Vagina (tissue), 2 donors: ENCODE measurements at regions of chr1 and their contacts with region 1.

Region 1: DNA sequence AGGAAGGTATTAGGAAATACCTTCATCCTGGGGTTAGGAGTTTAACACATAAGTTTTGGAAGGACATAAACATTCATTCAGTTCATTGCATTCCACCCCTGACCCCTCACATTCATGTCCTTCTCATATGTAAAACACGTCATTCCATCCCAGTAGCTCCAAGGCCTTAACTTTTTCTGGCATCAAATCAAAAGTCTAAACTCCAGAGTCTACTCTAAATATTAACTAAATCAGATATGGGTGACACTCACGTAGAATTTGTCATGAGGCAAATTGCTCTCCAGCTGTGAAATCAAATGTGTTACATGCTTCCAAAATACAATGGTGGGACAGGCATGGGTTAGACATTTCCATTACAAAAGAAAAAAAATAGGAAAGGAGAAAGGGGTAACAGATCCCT is 298.2 kb upstream of the LRRC7 start:
- DNase-seq: no peak
- H3K4me3 ChIP-seq: no peak overlapping the region
- H3K27ac ChIP-seq: no peak overlapping the region
- H3K4me1 ChIP-seq: peaks cover 3% of the 10 kb centered on the region
- H3K27me3 ChIP-seq: no peaks in the 10 kb centered on the region
- CTCF ChIP-seq: no peak
- POLR2A ChIP-seq: no peak

Region 2: GRCh38 chr1:68276431-68276830 is 993.1 kb before region 1 on chr1:
- intact Hi-C with region 1: loop called (anchors 5 kb)
- DNase-seq: no peak
- H3K4me3 ChIP-seq: no peak overlapping the region
- H3K27ac ChIP-seq: no peak overlapping the region
- H3K4me1 ChIP-seq: no peaks in the 10 kb centered on the region
- H3K27me3 ChIP-seq: no peaks in the 10 kb centered on the region
- CTCF ChIP-seq: no peak
- POLR2A ChIP-seq: no peak